ENCODE measurements at regions of chr7 and their contacts with region 1.

Region 1: GRCh38 chr7:37440738-37441385 is 7.8 kb downstream of the ELMO1 start:
- DNase-seq: no peak

Region 2: DNA sequence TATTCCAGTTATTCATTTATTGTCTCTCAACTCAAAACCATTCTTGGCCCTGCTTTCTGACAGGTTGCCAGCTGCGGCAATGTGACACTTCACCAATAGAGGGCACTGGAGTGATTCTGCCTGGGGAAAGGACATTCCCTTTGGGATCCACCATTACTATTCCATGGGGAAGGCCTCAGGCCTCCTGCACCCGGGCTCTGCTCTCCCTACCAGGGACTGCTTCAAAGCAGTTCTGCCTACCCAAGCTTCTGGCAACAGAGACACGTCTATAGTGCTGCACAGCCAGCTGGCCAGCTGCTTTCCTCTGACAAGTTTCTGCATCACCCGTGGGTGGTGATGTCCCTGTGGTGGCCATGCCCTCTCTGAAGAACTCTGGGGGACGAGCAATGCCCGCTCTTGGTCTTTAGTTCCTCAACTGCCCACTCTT is 156.0 kb before region 1 on chr7:
- intact Hi-C with region 1: loop called (anchors 5 kb)
- DNase-seq: peak in 41 of 42 donors; percentile 59 to 92 (median 77)

Region 3: GRCh38 chr7:37531225-37531624 is 90.4 kb after region 1 on chr7:
- intact Hi-C with region 1: no loop called
- DNase-seq: no peak

Region 4: GRCh38 chr7:37945336-37945735 is 504.5 kb after region 1 on chr7:
- intact Hi-C with region 1: no loop called
- DNase-seq: no peak